ENCODE measurements at regions of chr18 and their contacts with region 1.

Region 1: DNA sequence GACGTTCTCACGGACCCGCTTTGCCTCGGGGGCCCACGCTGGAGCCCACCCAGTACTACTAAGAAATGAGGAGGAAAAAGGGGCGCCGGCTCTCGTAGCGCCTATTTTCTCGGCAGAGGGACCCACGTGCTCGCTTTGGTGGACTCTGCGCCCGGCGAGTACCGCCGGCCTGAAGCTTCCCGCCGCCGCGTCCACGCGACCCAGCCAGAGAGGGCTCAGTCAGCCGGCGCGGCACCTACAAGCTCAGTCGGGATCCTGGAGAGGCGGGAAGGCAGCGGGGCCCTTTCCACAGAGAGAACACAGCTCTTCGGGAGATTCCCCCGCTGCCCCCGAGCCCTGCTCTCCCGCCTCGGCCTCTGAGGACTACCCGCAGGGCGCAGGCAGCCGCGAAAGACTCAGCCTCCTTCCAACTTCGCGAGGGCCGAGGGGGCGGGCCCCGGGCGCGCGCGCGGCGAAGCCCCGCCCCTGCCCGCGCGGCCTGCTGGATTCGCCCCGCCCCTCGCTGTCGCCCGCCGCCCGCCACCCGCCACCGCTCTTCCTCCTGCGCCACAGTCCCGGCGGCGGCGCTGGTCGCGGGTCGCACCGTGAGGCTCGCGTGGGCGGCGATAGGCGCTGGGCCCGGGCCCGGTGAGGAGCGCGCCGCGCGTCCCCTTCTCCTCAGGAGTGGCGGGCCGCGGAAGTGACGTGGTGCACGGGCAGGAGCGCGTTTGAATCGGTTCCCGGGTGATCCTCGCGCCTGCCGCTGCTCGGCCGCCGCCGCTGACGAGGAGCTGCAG is at the start of gene SMCHD1:
- DNase-seq: peak; percentile 87
- H3K4me3 Mint-ChIP-seq: peak within 1 kb of the TSS; percentile 95
- H3K27ac Mint-ChIP-seq: peak within 1 kb of the TSS; percentile 96
- H3K4me1 Mint-ChIP-seq: peaks cover 26% of the 10 kb centered on the region
- H3K27me3 Mint-ChIP-seq: peaks cover 1% of the 10 kb centered on the region
- total RNA-seq, gene SMCHD1: 162 TPM

Region 2: DNA sequence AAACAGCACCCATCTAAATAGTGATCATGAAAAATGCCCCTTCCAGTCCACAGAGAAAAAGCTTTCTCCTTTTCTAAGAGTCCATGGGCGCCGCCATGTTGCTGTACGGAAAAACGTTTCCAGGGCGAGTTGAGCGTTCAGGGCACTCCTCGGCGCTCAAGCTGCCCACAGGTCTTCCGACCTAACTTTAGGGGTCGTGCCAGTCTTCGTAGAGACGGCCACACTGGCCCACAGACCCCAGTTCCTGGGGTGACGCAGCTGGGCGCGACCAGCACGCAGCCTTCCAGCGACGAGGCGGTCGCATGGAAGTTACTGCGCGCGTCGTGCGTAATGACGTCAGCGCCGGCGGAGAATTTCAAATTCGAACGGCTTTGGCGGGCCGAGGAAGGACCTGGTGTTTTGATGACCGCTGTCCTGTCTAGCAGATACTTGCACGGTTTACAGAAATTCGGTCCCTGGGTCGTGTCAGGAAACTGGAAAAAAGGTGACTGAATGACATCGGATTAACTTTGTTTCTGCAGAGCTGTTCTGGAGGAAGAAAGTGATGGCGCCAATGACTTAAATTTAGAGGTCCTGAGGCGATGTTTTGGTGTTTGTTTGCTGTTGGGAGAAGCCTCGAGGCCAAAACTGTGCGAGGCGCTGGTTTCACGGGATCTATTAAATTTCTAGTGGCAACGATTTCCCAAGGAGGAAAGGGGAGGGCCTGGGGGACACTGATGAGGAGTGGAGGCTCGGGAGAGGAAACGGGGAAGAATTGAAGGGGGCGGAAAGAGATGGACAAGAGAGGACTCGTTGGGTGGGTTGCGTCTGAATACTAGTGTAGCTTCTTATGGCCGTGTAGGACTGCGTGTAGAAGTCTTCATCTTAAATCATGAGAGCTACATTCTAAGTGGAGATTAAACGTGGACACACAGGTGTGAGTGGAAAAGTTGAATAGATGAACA is 83.9 kb before region 1 on chr18 and contains the starts of genes METTL4 and NDC80:
- CTCF ChIA-PET with region 1: interaction called, 9 read pairs
- POLR2A ChIA-PET with region 1: interaction called, 195 read pairs
- DNase-seq: peak; percentile 87
- H3K4me3 Mint-ChIP-seq: peak within 1 kb of the TSS; percentile 95
- H3K27ac Mint-ChIP-seq: peak within 1 kb of the TSS; percentile 96
- H3K4me1 Mint-ChIP-seq: peaks cover 55% of the 10 kb centered on the region
- H3K27me3 Mint-ChIP-seq: no peaks in the 10 kb centered on the region
- total RNA-seq, gene METTL4: 22.1 to 23.7 TPM
- total RNA-seq, gene NDC80: 78.0 to 78.9 TPM

Region 3: GRCh38 chr18:2606335-2606734 is 49.0 kb before region 1 on chr18:
- CTCF ChIA-PET with region 1: interaction called, 8 read pairs
- POLR2A ChIA-PET with region 1: interaction called, 193 read pairs
- DNase-seq: no peak
- H3K4me3 Mint-ChIP-seq: peak overlapping the region; percentile 60
- H3K27ac Mint-ChIP-seq: peak overlapping the region; percentile 88
- H3K4me1 Mint-ChIP-seq: peaks cover 47% of the 10 kb centered on the region
- H3K27me3 Mint-ChIP-seq: no peaks in the 10 kb centered on the region

Region 4: GRCh38 chr18:2627821-2628276 is 27.5 kb before region 1 on chr18:
- CTCF ChIA-PET with region 1: no interaction called
- POLR2A ChIA-PET with region 1: interaction called, 47 read pairs
- DNase-seq: peak; percentile 28
- H3K4me3 Mint-ChIP-seq: no peak overlapping the region
- H3K27ac Mint-ChIP-seq: peak overlapping the region; percentile 58
- H3K4me1 Mint-ChIP-seq: peaks cover 29% of the 10 kb centered on the region
- H3K27me3 Mint-ChIP-seq: no peaks in the 10 kb centered on the region

Region 5: GRCh38 chr18:2641638-2642037 is 13.7 kb before region 1 on chr18:
- CTCF ChIA-PET with region 1: interaction called, 19 read pairs
- POLR2A ChIA-PET with region 1: interaction called, 486 read pairs
- DNase-seq: no peak
- H3K4me3 Mint-ChIP-seq: peak overlapping the region; percentile 45
- H3K27ac Mint-ChIP-seq: peak overlapping the region; percentile 92
- H3K4me1 Mint-ChIP-seq: peaks cover 54% of the 10 kb centered on the region
- H3K27me3 Mint-ChIP-seq: no peaks in the 10 kb centered on the region

Region 6: GRCh38 chr18:2687390-2688001 is 32.1 kb after region 1 on chr18:
- CTCF ChIA-PET with region 1: no interaction called
- POLR2A ChIA-PET with region 1: interaction called, 94 read pairs
- DNase-seq: no peak
- H3K4me3 Mint-ChIP-seq: peak overlapping the region; percentile 43
- H3K27ac Mint-ChIP-seq: peak overlapping the region; percentile 75
- H3K4me1 Mint-ChIP-seq: peaks cover 58% of the 10 kb centered on the region
- H3K27me3 Mint-ChIP-seq: no peaks in the 10 kb centered on the region

Measured in activated CD4-positive, alpha-beta memory T cell treated with anti-CD3 and anti-CD28 coated beads, Interleukin-2, amount 10 ng/mL, durations not matched to agents 7 days and 5 days (primary cell).